CD8-positive, alpha-beta memory T cell (primary cell): ENCODE measurements at regions of chr7 and their contacts with region 1.

Region 1: DNA sequence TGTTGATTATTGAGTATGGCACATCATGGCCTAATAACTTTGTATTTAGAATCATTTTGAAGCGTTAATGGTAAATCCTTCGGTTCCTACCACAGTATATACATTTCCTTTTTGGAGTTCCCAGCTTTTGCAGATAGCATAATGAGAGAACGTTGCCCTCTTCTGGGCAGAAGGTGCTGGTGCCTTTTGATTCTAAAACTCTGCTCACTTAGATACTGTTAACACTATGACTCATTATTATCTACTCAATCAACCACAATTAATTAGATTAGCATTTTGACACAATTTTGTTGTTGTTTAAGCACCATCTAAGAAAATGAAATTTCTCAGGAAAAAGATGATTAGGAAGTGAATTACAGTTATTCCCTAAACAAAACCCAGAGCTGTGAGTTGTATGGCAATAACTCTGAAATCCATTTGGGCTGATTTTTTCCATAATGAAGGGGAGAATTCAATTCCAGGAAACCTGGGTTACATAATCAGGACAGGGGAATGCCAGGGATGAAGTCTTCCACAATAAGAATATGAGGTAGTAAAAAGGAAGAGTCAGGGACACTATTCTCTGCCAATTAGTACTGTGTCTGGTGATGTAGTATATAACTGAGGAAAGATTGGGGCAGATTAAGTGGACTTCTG is 11.5 kb upstream of the DLD start:
- DNase-seq: peak in 4 of 5 donors; percentile 19 to 50 (median 32)
- H3K4me3 ChIP-seq: no peak overlapping the region
- H3K4me3 Mint-ChIP-seq: no peak overlapping the region
- H3K27ac ChIP-seq: no peak overlapping the region
- H3K27ac Mint-ChIP-seq: no peak overlapping the region
- H3K4me1 ChIP-seq: peaks cover 4% of the 10 kb centered on the region
- H3K4me1 Mint-ChIP-seq: peaks cover 8 to 19% (median 10%) of the 10 kb centered on the region in 3 donors
- H3K27me3 ChIP-seq: no peaks in the 10 kb centered on the region
- H3K27me3 Mint-ChIP-seq: peaks cover 4 to 30% of the 10 kb centered on the region in 2 donors

Region 2: GRCh38 chr7:107462740-107463444 is 416.6 kb before region 1 on chr7:
- CTCF ChIA-PET with region 1: interaction called, 15 read pairs
- POLR2A ChIA-PET with region 1: interaction called, 3 read pairs
- DNase-seq: peak; percentile 12 to 66 (median 30)
- H3K4me3 ChIP-seq: no peak overlapping the region
- H3K4me3 Mint-ChIP-seq: no peak overlapping the region
- H3K27ac ChIP-seq: no peak overlapping the region
- H3K27ac Mint-ChIP-seq: peak overlapping the region in 2 of 8 donors; percentile 1 to 27
- H3K4me1 ChIP-seq: no peaks in the 10 kb centered on the region
- H3K4me1 Mint-ChIP-seq: peaks cover 2 to 8% (median 5%) of the 10 kb centered on the region in 3 donors
- H3K27me3 ChIP-seq: no peaks in the 10 kb centered on the region
- H3K27me3 Mint-ChIP-seq: no peaks in the 10 kb centered on the region

Region 3: DNA sequence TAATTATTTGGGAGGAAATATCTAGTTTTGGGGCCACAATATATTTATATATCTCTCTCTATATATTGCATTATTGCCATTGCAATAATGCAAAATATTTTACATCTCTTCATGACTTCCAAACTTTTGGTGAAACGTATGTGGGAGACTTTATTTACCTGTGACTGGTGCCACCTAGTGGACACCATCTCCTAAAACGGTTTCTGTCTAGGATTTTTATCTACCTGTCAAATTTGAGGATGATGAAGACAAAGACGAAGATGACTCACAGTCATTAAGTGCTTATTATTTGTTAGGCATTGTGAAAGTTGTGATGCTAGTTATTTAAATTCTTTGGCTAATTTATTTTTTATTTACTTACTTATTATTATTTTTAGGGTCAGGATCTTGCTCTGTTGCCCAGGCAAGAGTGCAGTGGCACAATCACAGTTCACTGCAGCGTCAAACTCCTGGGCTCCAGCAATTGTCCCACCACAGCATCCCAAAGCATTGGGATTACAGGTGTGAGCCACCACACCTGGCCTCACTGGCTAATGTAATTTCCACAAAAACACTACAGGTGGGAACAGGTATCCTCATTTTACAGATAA is 154.3 kb before region 1 on chr7:
- CTCF ChIA-PET with region 1: interaction called, 11 read pairs
- POLR2A ChIA-PET with region 1: no interaction called
- DNase-seq: peak; percentile 19 to 51 (median 33)
- H3K4me3 ChIP-seq: no peak overlapping the region
- H3K4me3 Mint-ChIP-seq: no peak overlapping the region
- H3K27ac ChIP-seq: no peak overlapping the region
- H3K27ac Mint-ChIP-seq: no peak overlapping the region
- H3K4me1 ChIP-seq: no peaks in the 10 kb centered on the region
- H3K4me1 Mint-ChIP-seq: no peaks in the 10 kb centered on the region
- H3K27me3 ChIP-seq: no peaks in the 10 kb centered on the region
- H3K27me3 Mint-ChIP-seq: peaks cover 5 to 28% of the 10 kb centered on the region in 2 donors

Region 4: GRCh38 chr7:107856806-107857540 is 22.5 kb before region 1 on chr7:
- CTCF ChIA-PET with region 1: interaction called, 17 read pairs
- POLR2A ChIA-PET with region 1: interaction called, 4 read pairs
- DNase-seq: peak in 3 of 5 donors; percentile 21 to 50 (median 44)
- H3K4me3 ChIP-seq: peak overlapping the region; percentile 4
- H3K4me3 Mint-ChIP-seq: peak overlapping the region in 6 of 7 donors; percentile 55 to 76 (median 69)
- H3K27ac ChIP-seq: peak overlapping the region; percentile 16
- H3K27ac Mint-ChIP-seq: peak overlapping the region; percentile 82 to 97 (median 88)
- H3K4me1 ChIP-seq: peaks cover 23% of the 10 kb centered on the region
- H3K4me1 Mint-ChIP-seq: peaks cover 50 to 80% (median 79%) of the 10 kb centered on the region in 3 donors
- H3K27me3 ChIP-seq: no peaks in the 10 kb centered on the region
- H3K27me3 Mint-ChIP-seq: no peaks in the 10 kb centered on the region

Region 5: DNA sequence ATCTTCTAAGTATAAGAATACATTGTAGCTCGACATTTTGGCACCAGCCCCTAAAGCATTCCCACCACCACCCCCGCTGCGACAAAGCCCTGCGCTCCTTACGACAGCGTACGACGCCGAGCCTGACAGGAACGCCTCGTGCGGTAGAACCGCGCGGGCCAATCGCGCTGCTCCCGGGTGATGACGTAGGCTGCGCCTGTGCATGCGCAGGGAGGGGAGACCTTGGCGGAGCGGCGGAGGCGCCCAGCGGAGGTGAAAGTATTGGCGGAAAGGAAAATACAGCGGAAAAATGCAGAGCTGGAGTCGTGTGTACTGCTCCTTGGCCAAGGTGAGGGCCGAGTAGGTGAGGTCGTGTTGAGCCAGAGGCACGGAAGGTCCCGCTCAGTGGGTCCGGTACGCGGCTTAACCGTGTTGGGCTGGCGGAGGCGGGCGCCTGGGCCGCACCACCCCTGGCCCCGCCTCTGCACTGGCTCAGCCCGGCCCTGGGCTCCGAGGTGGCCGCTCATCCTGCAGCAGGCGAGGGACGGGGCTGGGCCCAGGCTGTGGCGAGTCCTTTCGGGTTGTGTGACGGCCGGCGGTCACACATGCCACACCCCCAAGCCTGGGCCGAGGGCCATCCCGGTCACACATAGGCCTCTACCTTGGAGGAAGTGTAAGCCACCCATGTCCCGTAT is 11.6 kb after region 1 on chr7 and contains the start of gene DLD:
- CTCF ChIA-PET with region 1: interaction called, 24 read pairs
- POLR2A ChIA-PET with region 1: interaction called, 4 read pairs
- DNase-seq: peak; percentile 90 to 95 (median 92)
- H3K4me3 ChIP-seq: peak within 1 kb of the TSS; percentile 86
- H3K4me3 Mint-ChIP-seq: peak within 1 kb of the TSS; percentile 91 to 100 (median 98)
- H3K27ac ChIP-seq: peak within 1 kb of the TSS; percentile 93
- H3K27ac Mint-ChIP-seq: peak within 1 kb of the TSS; percentile 90 to 100 (median 99)
- H3K4me1 ChIP-seq: peaks cover 40% of the 10 kb centered on the region
- H3K4me1 Mint-ChIP-seq: peaks cover 48 to 57% (median 54%) of the 10 kb centered on the region in 3 donors
- H3K27me3 ChIP-seq: no peaks in the 10 kb centered on the region
- H3K27me3 Mint-ChIP-seq: peaks cover 0 to 4% of the 10 kb centered on the region in 2 donors
- total RNA-seq, gene DLD: 121 TPM